ENCODE measurements at regions of chr15 and their contacts with region 1.

Region 1: DNA sequence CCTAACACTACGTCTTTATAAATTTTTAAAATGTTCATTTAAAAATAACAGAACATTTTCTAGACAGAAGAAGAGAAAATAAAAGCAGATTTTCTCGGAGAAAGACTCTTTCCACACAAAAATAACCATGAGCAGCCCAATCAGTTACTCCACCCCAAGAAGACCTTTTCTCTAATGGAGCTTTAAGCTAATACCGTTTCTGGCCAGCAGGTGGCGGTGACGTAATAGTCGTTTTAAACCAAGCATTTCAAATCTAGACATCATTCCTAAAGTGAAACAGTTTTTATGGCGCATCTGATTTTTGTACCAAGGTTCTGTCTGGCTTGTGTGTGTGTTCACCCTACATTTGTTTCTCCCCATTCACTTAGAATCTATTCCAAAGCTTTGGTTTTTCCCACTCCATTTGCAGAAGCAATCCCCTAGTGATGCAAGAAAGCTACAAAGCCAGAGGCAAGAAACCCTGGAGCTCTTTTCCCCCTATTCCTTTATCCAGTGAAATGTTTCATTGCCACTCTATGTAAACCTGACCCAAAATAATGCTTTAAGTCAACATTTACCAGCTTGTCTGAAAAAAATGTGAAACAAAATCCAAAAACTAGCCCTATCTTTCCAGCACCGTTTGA is 336.7 kb upstream of the IGF1R start:
- DNase-seq: peak; percentile 69 to 77
- H3K4me3 ChIP-seq: no peak overlapping the region
- H3K4me3 Mint-ChIP-seq: no peak overlapping the region
- H3K27ac Mint-ChIP-seq: no peak overlapping the region
- H3K4me1 ChIP-seq: no peaks in the 10 kb centered on the region
- H3K4me1 Mint-ChIP-seq: no peaks in the 10 kb centered on the region
- H3K27me3 ChIP-seq: no peaks in the 10 kb centered on the region
- H3K27me3 Mint-ChIP-seq: peaks cover 9% of the 10 kb centered on the region
- CTCF ChIP-seq: peak; percentile 70 to 76

Region 2: GRCh38 chr15:98421419-98422129 is 109.9 kb after region 1 on chr15:
- CTCF ChIA-PET with region 1: interaction called, 7 read pairs
- POLR2A ChIA-PET with region 1: no interaction called
- intact Hi-C with region 1: loop called (anchors 1 kb)
- DNase-seq: peak; percentile 48 to 71
- H3K4me3 ChIP-seq: no peak overlapping the region
- H3K4me3 Mint-ChIP-seq: no peak overlapping the region
- H3K27ac Mint-ChIP-seq: no peak overlapping the region
- H3K4me1 ChIP-seq: peaks cover 8% of the 10 kb centered on the region; the same call in 1 of the 2 replicates
- H3K4me1 Mint-ChIP-seq: no peaks in the 10 kb centered on the region
- H3K27me3 ChIP-seq: peaks cover 2% of the 10 kb centered on the region
- H3K27me3 Mint-ChIP-seq: peaks cover 28% of the 10 kb centered on the region
- CTCF ChIP-seq: peak; percentile 90 to 93

Region 3: GRCh38 chr15:98428253-98428989 is 116.7 kb after region 1 on chr15:
- CTCF ChIA-PET with region 1: interaction called, 16 read pairs
- POLR2A ChIA-PET with region 1: no interaction called
- intact Hi-C with region 1: loop called (anchors 1 kb)
- DNase-seq: peak; percentile 54 to 81
- H3K4me3 ChIP-seq: peak overlapping the region; percentile 14; the same call in 1 of the 2 replicates
- H3K4me3 Mint-ChIP-seq: peak overlapping the region; percentile 52
- H3K27ac Mint-ChIP-seq: no peak overlapping the region
- H3K4me1 ChIP-seq: no peaks in the 10 kb centered on the region
- H3K4me1 Mint-ChIP-seq: no peaks in the 10 kb centered on the region
- H3K27me3 ChIP-seq: no peaks in the 10 kb centered on the region
- H3K27me3 Mint-ChIP-seq: peaks cover 8% of the 10 kb centered on the region
- CTCF ChIP-seq: peak; percentile 72 to 87

Measured in Caco-2 (cell line).